Ovary (tissue), 10 donors: ENCODE measurements at regions of chr15 and their contacts with region 1.

Region 1: GRCh38 chr15:95470997-95471689 is 859.4 kb upstream of the NR2F2 start:
- DNase-seq: peak in 3 of 5 donors; percentile 58 to 67 (median 63)
- H3K4me3 ChIP-seq: no peak overlapping the region
- H3K27ac ChIP-seq: peak overlapping the region; percentile 26 to 77
- H3K4me1 ChIP-seq: peaks cover 12% of the 10 kb centered on the region
- H3K27me3 ChIP-seq: no peaks in the 10 kb centered on the region
- CTCF ChIP-seq: no peak
- EP300 ChIP-seq: no peak
- POLR2A ChIP-seq: no peak

Region 2: GRCh38 chr15:94749811-94750617 is 721.1 kb before region 1 on chr15:
- intact Hi-C with region 1: no loop called
- DNase-seq: peak in 1 of 5 donors; percentile 19
- H3K4me3 ChIP-seq: no peak overlapping the region
- H3K27ac ChIP-seq: peak overlapping the region in 1 of 2 donors; percentile 49
- H3K4me1 ChIP-seq: no peaks in the 10 kb centered on the region
- H3K27me3 ChIP-seq: no peaks in the 10 kb centered on the region
- CTCF ChIP-seq: no peak
- EP300 ChIP-seq: no peak
- POLR2A ChIP-seq: no peak

Region 3: DNA sequence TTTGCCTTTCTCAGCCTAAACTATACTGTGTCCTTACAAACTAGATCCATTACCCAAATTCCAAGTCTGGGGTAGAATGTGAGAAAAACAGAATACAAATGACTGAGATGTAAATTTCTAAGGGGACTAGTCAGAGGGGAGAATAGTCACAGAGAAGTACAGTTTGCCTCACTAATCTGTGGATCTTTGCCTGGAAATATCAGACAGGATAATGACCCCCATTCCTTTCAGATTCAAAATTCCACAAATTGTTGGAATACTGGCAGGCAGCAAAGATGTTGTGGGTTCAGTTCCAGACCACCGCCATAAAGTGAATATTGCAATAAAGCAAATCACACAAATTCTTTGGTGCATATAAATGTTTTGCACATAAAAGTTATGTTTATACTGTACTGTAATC is 96.5 kb after region 1 on chr15:
- intact Hi-C with region 1: no loop called
- DNase-seq: no peak
- H3K4me3 ChIP-seq: no peak overlapping the region
- H3K27ac ChIP-seq: no peak overlapping the region
- H3K4me1 ChIP-seq: no peaks in the 10 kb centered on the region
- H3K27me3 ChIP-seq: no peaks in the 10 kb centered on the region
- CTCF ChIP-seq: no peak
- EP300 ChIP-seq: no peak
- POLR2A ChIP-seq: no peak

Region 4: DNA sequence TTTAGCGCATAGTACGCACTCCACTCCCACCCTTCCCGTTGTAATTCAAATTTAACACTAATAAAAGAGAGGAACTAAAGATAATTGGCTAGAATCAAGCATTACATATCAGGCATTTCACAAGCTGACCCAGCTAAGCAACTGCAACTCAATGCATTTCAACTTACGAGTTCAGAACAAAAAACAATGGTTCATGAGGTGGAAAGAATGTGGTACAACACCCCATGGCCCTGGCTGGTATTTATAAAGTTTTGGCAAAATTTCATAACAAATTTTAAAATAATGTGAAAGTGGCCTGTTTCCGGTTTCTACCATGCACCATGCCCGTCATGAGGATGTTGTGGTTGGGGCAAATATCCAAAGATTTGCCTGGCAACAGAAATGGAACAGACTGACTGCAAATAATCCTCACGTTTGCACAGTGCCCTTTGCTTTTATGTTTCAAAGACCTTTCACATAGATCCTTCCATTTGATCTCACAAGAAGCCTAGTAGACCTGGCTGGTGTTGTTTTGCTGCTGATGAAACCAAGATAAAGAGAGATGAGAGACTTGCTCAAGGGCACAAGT is 404.1 kb after region 1 on chr15:
- intact Hi-C with region 1: loop called in 1 of 4 experiments (anchors 10 kb)
- DNase-seq: peak in 4 of 5 donors; percentile 36 to 65 (median 50)
- H3K4me3 ChIP-seq: peak overlapping the region; percentile 2
- H3K27ac ChIP-seq: peak overlapping the region in 1 of 2 donors; percentile 72
- H3K4me1 ChIP-seq: peaks cover 10% of the 10 kb centered on the region
- H3K27me3 ChIP-seq: no peaks in the 10 kb centered on the region
- CTCF ChIP-seq: peak in 1 of 3 donors; percentile 32
- EP300 ChIP-seq: no peak
- POLR2A ChIP-seq: no peak